Adrenal gland (tissue), 19 donors: ENCODE measurements at regions of chr1 and their contacts with region 1.

Region 1: GRCh38 chr1:172719694-172720138 is 60.8 kb downstream of the FASLG start:
- DNase-seq: peak in 1 of 7 donors; percentile 9
- H3K4me3 ChIP-seq: no peak overlapping the region
- H3K27ac ChIP-seq: no peak overlapping the region
- H3K4me1 ChIP-seq: peaks cover 0 to 9% of the 10 kb centered on the region in 2 donors
- H3K27me3 ChIP-seq: no peaks in the 10 kb centered on the region
- CTCF ChIP-seq: peak; percentile 58 to 98 (median 82)
- POLR2A ChIP-seq: no peak

Region 2: DNA sequence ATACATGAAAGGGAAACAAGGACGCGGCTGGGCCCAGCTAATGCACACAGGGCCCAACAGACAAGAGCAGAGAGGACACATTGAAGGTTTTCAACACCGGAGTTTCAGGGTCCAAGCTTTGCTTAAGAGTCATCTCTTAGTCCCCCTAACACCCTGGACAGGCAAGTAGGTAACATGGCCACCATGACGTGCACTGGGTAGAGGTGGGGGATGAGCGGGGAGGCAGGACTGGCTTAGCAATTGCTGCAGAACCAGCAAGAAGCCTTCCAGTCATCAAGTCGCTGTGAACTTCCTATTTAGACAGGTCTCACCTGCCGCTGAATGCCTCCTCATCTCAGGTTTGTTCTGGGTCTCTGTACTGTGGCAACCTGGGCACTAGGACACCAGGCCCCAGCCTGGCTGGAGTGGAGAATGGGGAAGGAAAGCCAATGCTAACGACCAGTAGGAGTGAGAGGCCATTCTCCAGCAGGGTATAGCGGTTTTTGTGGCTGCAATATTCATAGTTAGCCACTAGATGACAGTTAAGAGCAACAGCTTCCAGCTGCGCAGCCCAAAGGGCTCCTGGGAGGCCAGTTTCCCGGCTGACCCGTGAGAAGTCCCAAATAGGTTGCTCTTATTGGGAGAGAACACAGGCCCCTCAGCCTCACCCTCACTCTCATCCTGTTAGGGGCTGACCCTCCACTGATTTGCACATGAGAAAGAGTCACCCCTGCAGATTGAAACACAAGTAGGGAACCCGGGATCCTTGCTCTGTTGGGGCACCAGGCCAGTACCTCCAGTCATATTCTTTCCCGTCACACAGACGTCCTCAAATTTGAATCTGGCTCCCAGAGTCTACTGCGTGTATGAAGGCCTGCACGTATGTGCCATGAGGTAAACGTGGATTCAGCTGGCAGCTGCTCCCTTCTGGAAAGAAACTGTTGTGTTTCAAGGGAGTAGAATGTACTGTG is 269.9 kb before region 1 on chr1:
- intact Hi-C with region 1: loop called (anchors 5 kb)
- DNase-seq: peak in 6 of 7 donors; percentile 51 to 77 (median 60)
- H3K4me3 ChIP-seq: no peak overlapping the region
- H3K27ac ChIP-seq: peak overlapping the region in 3 of 5 donors; percentile 12 to 56 (median 40)
- H3K4me1 ChIP-seq: peaks cover 17 to 42% of the 10 kb centered on the region in 2 donors
- H3K27me3 ChIP-seq: no peaks in the 10 kb centered on the region
- CTCF ChIP-seq: peak; percentile 75 to 94 (median 88)
- POLR2A ChIP-seq: no peak

Region 3: GRCh38 chr1:172781513-172782140 is 61.9 kb after region 1 on chr1:
- intact Hi-C with region 1: no loop called
- DNase-seq: no peak
- H3K4me3 ChIP-seq: no peak overlapping the region
- H3K27ac ChIP-seq: no peak overlapping the region
- H3K4me1 ChIP-seq: peaks cover 0 to 8% of the 10 kb centered on the region in 2 donors
- H3K27me3 ChIP-seq: no peaks in the 10 kb centered on the region
- CTCF ChIP-seq: no peak
- POLR2A ChIP-seq: no peak